Posterior vena cava (tissue), 2 donors: ENCODE measurements at regions of chr4 and their contacts with region 1.

Region 1: DNA sequence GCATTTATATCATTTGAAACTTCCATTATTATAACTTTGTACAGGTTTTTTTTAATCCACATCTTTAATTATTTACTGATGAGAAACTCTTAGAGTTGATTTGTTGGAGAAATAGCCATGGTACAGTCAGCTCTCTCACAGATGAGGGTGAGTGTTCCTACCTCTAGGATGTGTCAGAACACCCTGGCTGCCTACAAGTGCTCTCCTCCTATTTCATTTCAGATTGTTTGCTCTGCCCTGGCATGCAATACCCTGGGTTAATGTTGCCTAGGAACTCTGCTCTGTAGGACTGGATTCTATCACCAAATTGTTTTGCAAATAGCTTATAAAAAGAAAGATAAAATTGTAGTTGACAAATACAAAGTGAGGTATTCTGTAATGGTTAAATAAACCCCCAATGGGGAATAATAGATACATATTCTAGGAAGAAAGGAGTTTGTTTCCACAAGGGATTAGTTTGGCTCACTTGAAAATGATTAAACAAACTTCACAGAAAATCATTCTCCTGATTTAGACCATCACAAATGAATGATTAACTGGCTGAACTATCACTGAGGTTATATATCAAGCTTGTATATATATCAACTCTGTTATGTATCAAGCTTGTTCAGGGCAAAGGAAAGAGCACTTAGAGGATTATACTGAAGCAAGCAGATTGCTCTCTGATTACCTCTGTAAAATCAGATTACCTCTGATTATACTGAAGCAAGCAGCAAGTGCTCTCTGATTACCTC is 150.0 kb downstream of the PDE5A start:
- DNase-seq: no peak

Region 2: GRCh38 chr4:121009578-121010478 is 1531.2 kb after region 1 on chr4:
- intact Hi-C with region 1: loop called in 1 of 2 experiments (anchors 5 kb)
- DNase-seq: no peak